ENCODE measurements at regions of chr17 and their contacts with region 1.

Region 1: GRCh38 chr17:31216053-31216751 is 80.8 kb downstream of the OMG start:
- DNase-seq: peak in 1 of 5 donors; percentile 34
- H3K4me3 ChIP-seq: no peak overlapping the region
- H3K27ac ChIP-seq: no peak overlapping the region
- H3K4me1 ChIP-seq: no peaks in the 10 kb centered on the region
- H3K27me3 ChIP-seq: no peaks in the 10 kb centered on the region
- CTCF ChIP-seq: peak; percentile 56 to 63 (median 56)
- EP300 ChIP-seq: no peak
- POLR2A ChIP-seq: no peak

Region 2: DNA sequence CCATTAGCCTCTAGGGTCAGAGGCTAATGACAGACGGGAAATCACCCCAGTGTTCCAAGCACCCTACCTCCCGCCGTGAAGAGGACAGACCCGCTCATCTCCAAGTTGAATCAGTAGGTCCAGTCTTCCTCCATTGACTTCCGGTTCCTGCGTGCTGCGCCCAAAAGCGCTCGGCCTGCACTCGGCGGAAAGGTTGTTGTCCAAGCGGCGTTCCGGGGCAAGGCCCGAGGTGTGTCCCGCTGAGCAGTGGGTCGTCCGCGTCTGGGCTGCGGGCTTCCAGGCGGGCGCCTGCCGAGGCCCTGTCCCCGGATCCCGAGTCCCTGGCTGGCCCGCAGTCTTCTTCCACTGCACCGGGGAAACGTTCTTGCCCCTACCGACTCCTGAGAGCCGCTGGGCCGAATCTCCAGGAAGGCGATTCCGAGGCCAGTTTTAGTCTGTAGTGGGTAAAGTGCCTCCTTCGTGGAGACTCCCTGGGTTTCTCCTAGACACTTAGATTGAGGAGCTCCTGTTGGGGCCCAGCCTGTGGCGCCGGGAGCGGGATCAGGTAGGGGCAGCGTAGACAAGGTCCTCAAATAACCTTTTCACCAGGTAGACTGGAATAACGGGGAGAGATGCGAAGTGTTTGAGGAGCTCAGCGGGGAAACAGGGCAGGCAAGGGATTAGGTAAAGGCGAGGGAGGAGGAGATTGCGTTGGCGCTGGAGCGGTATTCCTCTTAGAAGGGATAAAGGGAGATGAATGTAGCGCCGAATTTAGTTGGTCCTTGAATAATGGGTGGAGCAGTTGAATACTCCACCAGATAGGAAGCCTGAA is 309.9 kb before region 1 on chr17 and contains the start of gene TEFM:
- intact Hi-C with region 1: loop called in 1 of 4 experiments (anchors 10 kb)
- DNase-seq: peak; percentile 83 to 92 (median 86)
- H3K4me3 ChIP-seq: peak within 1 kb of the TSS; percentile 66
- H3K27ac ChIP-seq: peak within 1 kb of the TSS; percentile 23 to 44
- H3K4me1 ChIP-seq: peaks cover 8% of the 10 kb centered on the region
- H3K27me3 ChIP-seq: no peaks in the 10 kb centered on the region
- CTCF ChIP-seq: no peak
- EP300 ChIP-seq: no peak
- POLR2A ChIP-seq: peak; percentile 43
- total RNA-seq, gene TEFM: 11.8 to 18.3 (median 14.7) TPM

Region 3: DNA sequence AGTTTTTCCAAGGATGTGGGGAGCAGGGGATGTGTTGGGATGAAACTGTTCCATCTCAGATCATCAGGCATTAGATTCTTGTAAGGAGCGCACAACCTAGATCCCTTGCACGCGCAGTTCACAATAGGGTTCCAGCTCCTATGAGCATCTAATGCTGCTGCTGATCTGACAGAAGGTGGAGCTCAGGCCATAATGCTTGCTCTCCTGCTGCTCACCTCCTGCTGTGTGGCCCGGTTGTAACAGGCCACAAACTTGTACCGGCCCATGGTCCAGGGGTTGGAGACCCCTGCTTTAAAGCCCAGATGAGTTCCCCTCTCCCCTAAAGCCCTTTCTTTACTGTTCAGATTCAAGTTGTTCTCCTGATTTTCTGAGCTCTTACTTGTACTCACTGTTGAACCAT is 200.6 kb before region 1 on chr17:
- intact Hi-C with region 1: loop called in 2 of 4 experiments (anchors 5 to 10 kb)
- DNase-seq: no peak
- H3K4me3 ChIP-seq: no peak overlapping the region
- H3K27ac ChIP-seq: no peak overlapping the region
- H3K4me1 ChIP-seq: no peaks in the 10 kb centered on the region
- H3K27me3 ChIP-seq: no peaks in the 10 kb centered on the region
- CTCF ChIP-seq: no peak
- EP300 ChIP-seq: no peak
- POLR2A ChIP-seq: no peak

Region 4: DNA sequence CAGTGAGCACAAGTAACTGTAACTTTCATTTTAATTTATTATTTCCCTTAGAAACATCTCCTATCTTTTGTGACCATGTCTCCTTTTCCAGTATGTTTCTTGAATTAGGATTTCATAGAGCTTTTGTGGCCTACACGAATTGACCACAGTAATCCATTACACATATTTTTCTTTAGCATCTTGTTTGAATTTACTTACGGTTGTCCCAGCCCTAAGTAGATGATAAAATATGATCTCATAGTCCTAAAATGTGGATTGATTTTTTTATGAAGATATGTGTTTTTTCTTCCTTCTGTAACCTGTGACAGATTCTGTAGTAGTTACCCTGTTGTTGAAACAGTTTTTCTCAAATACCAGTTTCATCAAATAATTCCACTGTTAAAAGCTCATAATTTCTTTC is 59.9 kb before region 1 on chr17:
- intact Hi-C with region 1: no loop called
- DNase-seq: no peak
- H3K4me3 ChIP-seq: no peak overlapping the region
- H3K27ac ChIP-seq: no peak overlapping the region
- H3K4me1 ChIP-seq: no peaks in the 10 kb centered on the region
- H3K27me3 ChIP-seq: no peaks in the 10 kb centered on the region
- CTCF ChIP-seq: no peak
- EP300 ChIP-seq: no peak
- POLR2A ChIP-seq: no peak

Region 5: DNA sequence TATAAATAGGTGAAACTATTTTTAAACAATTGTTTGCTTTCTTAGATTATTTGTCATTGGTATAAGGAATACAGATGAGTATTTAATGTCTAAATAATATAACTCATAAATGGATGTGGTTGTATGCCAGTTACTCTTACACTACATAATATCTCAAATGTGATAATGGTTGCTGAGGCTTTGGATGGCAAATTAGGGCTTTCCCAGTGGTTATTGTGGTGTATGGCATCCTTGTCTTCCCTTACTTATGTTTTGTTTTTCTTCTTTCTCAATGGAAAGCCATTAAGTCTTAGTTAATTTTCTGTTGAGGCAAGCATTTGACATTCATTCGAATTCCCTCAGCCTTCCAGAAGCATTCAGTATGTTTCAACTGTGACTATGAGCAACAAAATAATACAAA is 70.4 kb after region 1 on chr17:
- intact Hi-C with region 1: no loop called
- DNase-seq: no peak
- H3K4me3 ChIP-seq: no peak overlapping the region
- H3K27ac ChIP-seq: no peak overlapping the region
- H3K4me1 ChIP-seq: no peaks in the 10 kb centered on the region
- H3K27me3 ChIP-seq: no peaks in the 10 kb centered on the region
- CTCF ChIP-seq: no peak
- EP300 ChIP-seq: no peak
- POLR2A ChIP-seq: no peak

Measured in ovary (tissue), 10 donors.